CD8-positive, alpha-beta memory T cell (primary cell): ENCODE measurements at regions of chr1 and their contacts with region 1.

Region 1: DNA sequence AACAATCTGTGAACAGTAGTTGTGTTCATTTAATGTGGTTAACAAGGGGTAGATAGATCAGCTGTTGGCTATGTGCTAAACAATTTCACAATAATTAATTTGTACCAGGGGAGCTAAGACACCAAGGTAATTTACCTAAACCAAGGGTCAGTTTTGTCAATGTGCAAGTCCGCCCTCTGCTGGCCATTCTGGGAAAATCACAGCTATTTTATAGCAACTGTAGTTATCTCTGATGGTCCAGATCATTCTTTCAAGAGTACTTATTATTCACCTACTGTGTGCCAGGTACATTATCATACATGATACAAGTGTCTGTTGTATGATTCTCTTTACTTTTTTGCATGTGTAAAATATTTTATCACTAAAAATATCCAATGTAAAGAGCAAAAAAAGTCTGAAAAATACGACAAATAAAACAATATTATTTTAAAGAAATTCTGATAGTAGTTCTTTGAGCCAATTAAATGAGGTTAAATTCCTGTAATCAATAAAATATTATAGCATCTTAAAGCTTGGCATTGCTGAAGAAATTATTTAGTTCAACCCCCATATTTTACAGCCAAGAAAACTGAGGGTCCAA is 312.3 kb upstream of the FAM78B start:
- DNase-seq: peak; percentile 14 to 68 (median 34)
- H3K4me3 ChIP-seq: no peak overlapping the region
- H3K4me3 Mint-ChIP-seq: no peak overlapping the region
- H3K27ac ChIP-seq: no peak overlapping the region
- H3K27ac Mint-ChIP-seq: no peak overlapping the region
- H3K4me1 ChIP-seq: no peaks in the 10 kb centered on the region
- H3K4me1 Mint-ChIP-seq: no peaks in the 10 kb centered on the region
- H3K27me3 ChIP-seq: no peaks in the 10 kb centered on the region
- H3K27me3 Mint-ChIP-seq: no peaks in the 10 kb centered on the region

Region 2: DNA sequence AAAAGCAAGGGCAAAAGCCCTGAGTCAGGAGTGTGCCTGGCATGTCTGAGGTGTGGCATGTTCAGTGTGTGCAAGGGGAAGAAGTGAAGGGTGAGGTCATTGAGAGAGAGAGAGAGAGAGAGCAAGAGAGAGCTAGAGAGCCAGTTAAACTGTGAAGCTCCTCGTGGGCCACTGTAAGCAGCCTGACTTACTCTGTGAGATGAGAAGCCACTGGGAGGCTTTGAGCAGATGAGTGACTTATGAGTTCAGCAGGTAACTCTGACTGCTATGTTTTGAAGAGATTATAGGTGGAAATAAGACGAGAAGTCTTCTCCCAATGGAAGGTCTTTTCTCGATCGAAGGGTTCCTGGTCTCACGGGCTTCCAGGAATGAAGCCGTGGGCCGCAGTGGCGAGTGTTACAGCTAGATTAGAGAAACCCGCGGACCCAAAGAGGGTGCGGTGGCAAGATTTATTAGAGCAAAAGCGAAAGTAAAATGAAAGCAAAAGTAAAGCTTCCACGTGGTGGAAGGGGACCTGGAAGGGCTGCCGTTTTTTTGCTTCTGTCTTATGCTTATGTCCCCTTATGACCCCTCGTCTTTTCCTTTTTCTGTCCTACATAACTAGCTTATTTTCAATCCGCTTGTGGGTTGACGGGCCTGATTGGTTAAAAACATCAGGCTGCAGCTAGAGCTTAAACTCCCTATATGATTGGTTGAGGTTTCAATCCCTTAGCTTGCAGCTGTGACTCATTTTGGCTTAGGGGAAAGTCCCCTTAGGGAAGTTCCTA is 10.7 kb after region 1 on chr1:
- CTCF ChIA-PET with region 1: interaction called, 30 read pairs
- POLR2A ChIA-PET with region 1: no interaction called
- DNase-seq: peak; percentile 5 to 60 (median 55)
- H3K4me3 ChIP-seq: peak overlapping the region; percentile 89
- H3K4me3 Mint-ChIP-seq: no peak overlapping the region
- H3K27ac ChIP-seq: peak overlapping the region; percentile 90
- H3K27ac Mint-ChIP-seq: no peak overlapping the region
- H3K4me1 ChIP-seq: peaks cover 25% of the 10 kb centered on the region
- H3K4me1 Mint-ChIP-seq: peaks cover 6 to 25% (median 11%) of the 10 kb centered on the region in 3 donors
- H3K27me3 ChIP-seq: no peaks in the 10 kb centered on the region
- H3K27me3 Mint-ChIP-seq: peaks cover 0 to 3% of the 10 kb centered on the region in 2 donors

Region 3: GRCh38 chr1:166527752-166528151 is 48.6 kb after region 1 on chr1:
- CTCF ChIA-PET with region 1: no interaction called
- POLR2A ChIA-PET with region 1: no interaction called
- DNase-seq: no peak
- H3K4me3 ChIP-seq: no peak overlapping the region
- H3K4me3 Mint-ChIP-seq: no peak overlapping the region
- H3K27ac ChIP-seq: no peak overlapping the region
- H3K27ac Mint-ChIP-seq: no peak overlapping the region
- H3K4me1 ChIP-seq: no peaks in the 10 kb centered on the region
- H3K4me1 Mint-ChIP-seq: no peaks in the 10 kb centered on the region
- H3K27me3 ChIP-seq: no peaks in the 10 kb centered on the region
- H3K27me3 Mint-ChIP-seq: peaks cover 0 to 14% of the 10 kb centered on the region in 2 donors